Right lobe of liver (tissue), 6 donors: ENCODE measurements at regions of chr9 and their contacts with region 1.

Region 1: DNA sequence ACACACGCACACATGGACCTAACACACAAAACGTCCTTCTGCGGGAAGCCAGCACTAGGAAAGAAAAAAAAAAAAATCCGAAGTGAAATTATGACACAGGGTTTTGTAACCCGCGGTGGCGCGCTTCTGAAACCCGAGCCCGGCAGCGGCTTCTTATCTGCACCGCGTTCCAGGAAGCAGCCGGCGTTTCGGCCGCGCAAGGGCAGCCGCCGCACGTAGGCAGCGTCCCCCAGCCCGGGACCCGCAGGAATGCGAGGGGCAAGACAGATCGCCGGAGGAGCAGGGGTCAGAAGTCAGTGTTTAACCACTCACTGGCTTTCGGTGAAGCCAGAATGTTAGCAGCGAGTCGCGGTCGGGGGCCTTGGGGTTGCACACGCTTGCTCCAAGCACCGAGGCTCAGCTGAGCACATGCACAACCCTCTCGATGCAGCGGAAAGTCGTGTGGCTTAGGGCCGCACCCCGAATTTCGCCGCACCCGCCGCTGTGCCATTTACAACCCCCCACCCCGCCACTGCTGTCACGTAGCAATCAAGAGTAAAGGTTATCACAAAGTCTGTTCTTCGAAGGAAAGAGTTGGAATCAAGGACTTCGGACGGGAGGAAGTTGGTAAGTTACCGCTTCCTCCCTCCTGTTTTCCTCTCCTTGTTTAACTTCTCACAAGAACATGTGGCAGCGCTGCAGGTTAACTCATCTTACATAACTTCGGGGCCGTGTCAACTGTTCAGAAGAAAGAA is 167.9 kb downstream of the AUH start:
- DNase-seq: peak; percentile 87 to 91 (median 89)
- ATAC-seq: peak; percentile 58 to 71 (median 64)
- H3K4me3 ChIP-seq: peak overlapping the region; percentile 32 to 53 (median 48)
- H3K27ac ChIP-seq: peak overlapping the region; percentile 99
- H3K4me1 ChIP-seq: peaks cover 0 to 50% (median 16%) of the 10 kb centered on the region in 4 donors
- H3K27me3 ChIP-seq: no peaks in the 10 kb centered on the region
- CTCF ChIP-seq: no peak
- POLR2A ChIP-seq: peak; percentile 79

Region 2: DNA sequence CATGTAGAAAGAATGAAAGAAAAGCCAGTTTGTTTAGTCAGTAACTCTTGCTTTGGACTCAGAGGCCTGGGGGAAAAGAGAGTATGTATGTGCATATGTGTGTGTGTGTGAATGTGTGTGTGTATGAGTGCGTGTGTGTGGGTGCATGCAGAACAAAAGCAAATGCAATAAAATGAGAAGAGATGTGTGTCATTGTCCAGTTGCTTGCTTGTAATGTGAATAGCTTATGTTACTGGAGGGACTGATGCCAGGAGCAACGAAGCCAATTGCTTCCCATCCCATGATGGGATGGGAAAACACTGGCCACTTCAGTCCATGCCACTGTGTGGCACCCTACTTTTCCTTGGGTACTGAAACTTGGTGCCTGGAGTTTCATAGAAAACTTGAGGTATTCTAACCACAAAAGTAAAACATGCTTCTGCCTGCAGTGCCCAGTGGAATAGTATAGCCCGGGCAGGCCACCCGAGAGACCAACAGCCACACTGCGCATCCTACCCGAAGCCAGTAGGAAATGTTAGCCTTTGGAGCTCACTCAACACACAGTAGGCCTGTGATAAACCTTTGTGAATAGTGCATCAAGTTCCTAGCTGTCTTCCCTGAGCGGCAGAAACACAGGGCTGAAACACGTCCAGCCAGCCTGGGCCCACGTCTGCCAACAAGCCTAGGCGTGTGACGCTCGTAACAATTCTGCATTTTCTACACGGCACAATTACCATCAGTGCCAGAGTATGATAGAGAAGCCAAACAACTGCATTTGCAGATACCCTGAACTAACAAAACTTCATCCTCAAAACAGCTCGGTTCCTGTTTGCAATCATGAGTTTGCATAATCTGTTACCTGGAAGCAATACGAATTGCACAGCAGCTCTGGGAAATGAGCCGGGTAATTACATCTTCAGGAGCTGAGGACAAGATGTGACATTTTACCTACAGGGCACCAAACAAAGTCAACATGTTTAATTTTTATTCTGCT is 194.1 kb before region 1 on chr9:
- intact Hi-C with region 1: loop called in 1 of 2 experiments (anchors 10 kb)
- DNase-seq: peak; percentile 69 to 75 (median 73)
- ATAC-seq: peak; percentile 86 to 93 (median 90)
- H3K4me3 ChIP-seq: no peak overlapping the region
- H3K27ac ChIP-seq: peak overlapping the region; percentile 75 to 89 (median 80)
- H3K4me1 ChIP-seq: peaks cover 0 to 29% (median 14%) of the 10 kb centered on the region in 4 donors
- H3K27me3 ChIP-seq: no peaks in the 10 kb centered on the region
- CTCF ChIP-seq: no peak
- POLR2A ChIP-seq: peak; percentile 48

Region 3: GRCh38 chr9:91422758-91423711 is 229.2 kb after region 1 on chr9:
- intact Hi-C with region 1: loop called in 1 of 2 experiments (anchors 10 kb)
- DNase-seq: peak; percentile 56 to 82 (median 70)
- ATAC-seq: peak; percentile 5 to 44 (median 15)
- H3K4me3 ChIP-seq: peak overlapping the region; percentile 60 to 69 (median 67)
- H3K27ac ChIP-seq: peak overlapping the region; percentile 94 to 100 (median 96)
- H3K4me1 ChIP-seq: peaks cover 0 to 25% (median 3%) of the 10 kb centered on the region in 4 donors
- H3K27me3 ChIP-seq: no peaks in the 10 kb centered on the region
- CTCF ChIP-seq: peak in 3 of 4 donors; percentile 6 to 21 (median 10)
- POLR2A ChIP-seq: peak; percentile 83